T-cell (primary cell): ENCODE measurements at regions of chr6 and their contacts with region 1.

Region 1: DNA sequence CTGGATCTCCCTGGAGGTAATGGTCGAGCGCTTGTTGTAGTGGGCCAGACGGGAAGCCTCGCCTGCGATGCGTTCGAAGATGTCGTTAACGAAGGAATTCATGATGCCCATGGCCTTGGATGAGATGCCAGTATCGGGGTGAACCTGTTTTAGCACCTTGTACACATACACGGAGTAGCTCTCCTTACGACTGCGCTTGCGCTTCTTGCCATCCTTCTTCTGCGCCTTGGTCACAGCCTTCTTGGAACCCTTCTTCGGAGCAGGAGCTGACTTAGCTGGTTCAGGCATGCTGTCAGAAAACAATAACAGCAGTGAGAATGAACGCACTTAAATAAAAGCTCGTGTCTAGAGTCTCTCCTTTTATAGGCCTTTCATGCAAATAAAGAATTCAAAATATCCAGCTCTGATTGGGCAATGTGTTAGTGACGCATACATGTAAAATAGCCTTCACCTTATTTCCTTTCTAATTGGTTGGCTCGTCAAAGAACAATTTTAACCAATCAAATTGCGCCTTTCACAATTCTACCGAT is 129.2 kb downstream of the HFE start:
- DNase-seq: peak; percentile 56 to 93 (median 76)
- ATAC-seq: peak; percentile 77 to 87 (median 83)
- H3K4me3 ChIP-seq: peak overlapping the region; percentile 73 to 91
- H3K4me3 Mint-ChIP-seq: no peak overlapping the region
- H3K27ac ChIP-seq: peak overlapping the region; percentile 94
- H3K27ac Mint-ChIP-seq: no peak overlapping the region
- H3K4me1 ChIP-seq: peaks cover 13 to 32% of the 10 kb centered on the region in 2 experiments
- H3K4me1 Mint-ChIP-seq: peaks cover 0 to 8% (median 5%) of the 10 kb centered on the region in 3 donors
- H3K27me3 ChIP-seq: no peaks in the 10 kb centered on the region
- H3K27me3 Mint-ChIP-seq: no peaks in the 10 kb centered on the region

Region 2: DNA sequence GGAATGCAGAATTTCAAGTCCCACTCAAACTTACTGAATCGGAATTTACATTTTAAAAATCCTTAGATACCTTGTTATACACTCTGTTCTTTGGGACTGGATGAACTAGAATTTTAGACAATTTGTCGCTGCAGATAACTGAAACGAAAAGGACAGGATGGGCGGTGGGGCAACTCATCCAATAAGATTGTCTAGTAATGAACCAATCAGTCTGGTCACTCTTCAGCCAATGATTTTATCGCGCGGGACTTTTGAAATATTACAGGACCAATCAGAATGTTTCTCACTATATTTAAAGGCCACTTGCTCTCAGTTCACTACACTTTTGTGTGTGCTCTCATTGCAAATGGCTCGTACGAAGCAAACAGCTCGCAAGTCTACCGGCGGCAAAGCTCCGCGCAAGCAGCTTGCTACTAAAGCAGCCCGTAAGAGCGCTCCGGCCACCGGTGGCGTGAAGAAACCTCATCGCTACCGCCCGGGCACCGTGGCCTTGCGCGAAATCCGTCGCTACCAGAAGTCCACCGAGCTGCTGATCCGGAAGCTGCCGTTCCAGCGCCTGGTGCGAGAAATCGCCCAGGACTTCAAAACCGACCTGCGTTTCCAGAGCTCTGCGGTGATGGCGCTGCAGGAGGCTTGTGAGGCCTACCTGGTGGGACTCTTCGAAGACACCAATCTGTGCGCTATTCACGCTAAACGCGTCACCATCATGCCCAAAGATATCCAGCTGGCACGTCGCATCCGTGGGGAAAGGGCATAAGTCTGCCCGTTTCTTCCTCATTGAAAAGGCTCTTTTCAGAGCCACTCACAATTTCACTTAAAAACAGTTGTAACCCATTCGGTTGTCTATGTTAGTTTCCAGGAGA is 171.1 kb before region 1 on chr6:
- CTCF ChIA-PET with region 1: no interaction called
- POLR2A ChIA-PET with region 1: interaction called, 3 to 21 read pairs
- DNase-seq: peak; percentile 45 to 90 (median 78)
- ATAC-seq: peak; percentile 63 to 66 (median 64)
- H3K4me3 ChIP-seq: peak overlapping the region; percentile 77 to 83
- H3K4me3 Mint-ChIP-seq: peak overlapping the region; percentile 84 to 91 (median 90)
- H3K27ac ChIP-seq: peak overlapping the region; percentile 90
- H3K27ac Mint-ChIP-seq: peak overlapping the region; percentile 98
- H3K4me1 ChIP-seq: peaks cover 5 to 26% of the 10 kb centered on the region in 2 experiments
- H3K4me1 Mint-ChIP-seq: peaks cover 15 to 27% (median 26%) of the 10 kb centered on the region in 3 donors
- H3K27me3 ChIP-seq: no peaks in the 10 kb centered on the region
- H3K27me3 Mint-ChIP-seq: no peaks in the 10 kb centered on the region

Region 3: GRCh38 chr6:26183581-26184366 is 32.6 kb before region 1 on chr6:
- CTCF ChIA-PET with region 1: interaction called, 4 to 26 read pairs
- POLR2A ChIA-PET with region 1: interaction called, 13 to 85 read pairs
- DNase-seq: peak in 25 of 35 experiments; percentile 20 to 85 (median 42)
- ATAC-seq: peak; percentile 87 to 91 (median 89)
- H3K4me3 ChIP-seq: peak overlapping the region; percentile 57 to 83
- H3K4me3 Mint-ChIP-seq: peak overlapping the region; percentile 88 to 96 (median 93)
- H3K27ac ChIP-seq: peak overlapping the region; percentile 76
- H3K27ac Mint-ChIP-seq: peak overlapping the region; percentile 94 to 98
- H3K4me1 ChIP-seq: peaks cover 12 to 30% of the 10 kb centered on the region in 2 experiments
- H3K4me1 Mint-ChIP-seq: peaks cover 42 to 48% (median 46%) of the 10 kb centered on the region in 3 donors
- H3K27me3 ChIP-seq: no peaks in the 10 kb centered on the region
- H3K27me3 Mint-ChIP-seq: no peaks in the 10 kb centered on the region

Region 4: GRCh38 chr6:26234421-26235296 is 18.2 kb after region 1 on chr6:
- CTCF ChIA-PET with region 1: interaction called in 1 of 2 experiments, 32 read pairs
- POLR2A ChIA-PET with region 1: interaction called, 67 to 199 read pairs
- DNase-seq: peak; percentile 52 to 83 (median 66)
- ATAC-seq: peak; percentile 66 to 78 (median 76)
- H3K4me3 ChIP-seq: peak overlapping the region; percentile 88 to 98
- H3K4me3 Mint-ChIP-seq: peak overlapping the region; percentile 87 to 96 (median 88)
- H3K27ac ChIP-seq: peak overlapping the region; percentile 95
- H3K27ac Mint-ChIP-seq: peak overlapping the region; percentile 96 to 100
- H3K4me1 ChIP-seq: peaks cover 13 to 19% of the 10 kb centered on the region in 2 experiments
- H3K4me1 Mint-ChIP-seq: peaks cover 32 to 39% (median 36%) of the 10 kb centered on the region in 3 donors
- H3K27me3 ChIP-seq: no peaks in the 10 kb centered on the region
- H3K27me3 Mint-ChIP-seq: no peaks in the 10 kb centered on the region

Region 5: GRCh38 chr6:26270903-26271667 is 54.7 kb after region 1 on chr6:
- CTCF ChIA-PET with region 1: interaction called in 1 of 2 experiments, 11 read pairs
- POLR2A ChIA-PET with region 1: interaction called, 32 to 91 read pairs
- DNase-seq: peak; percentile 49 to 90 (median 74)
- ATAC-seq: peak; percentile 20 to 35 (median 32)
- H3K4me3 ChIP-seq: peak overlapping the region; percentile 71 to 83
- H3K4me3 Mint-ChIP-seq: no peak overlapping the region
- H3K27ac ChIP-seq: peak overlapping the region; percentile 89
- H3K27ac Mint-ChIP-seq: peak overlapping the region in 1 of 2 donors; percentile 58
- H3K4me1 ChIP-seq: peaks cover 18 to 31% of the 10 kb centered on the region in 2 experiments
- H3K4me1 Mint-ChIP-seq: peaks cover 20 to 29% (median 21%) of the 10 kb centered on the region in 3 donors
- H3K27me3 ChIP-seq: no peaks in the 10 kb centered on the region
- H3K27me3 Mint-ChIP-seq: no peaks in the 10 kb centered on the region

Region 6: DNA sequence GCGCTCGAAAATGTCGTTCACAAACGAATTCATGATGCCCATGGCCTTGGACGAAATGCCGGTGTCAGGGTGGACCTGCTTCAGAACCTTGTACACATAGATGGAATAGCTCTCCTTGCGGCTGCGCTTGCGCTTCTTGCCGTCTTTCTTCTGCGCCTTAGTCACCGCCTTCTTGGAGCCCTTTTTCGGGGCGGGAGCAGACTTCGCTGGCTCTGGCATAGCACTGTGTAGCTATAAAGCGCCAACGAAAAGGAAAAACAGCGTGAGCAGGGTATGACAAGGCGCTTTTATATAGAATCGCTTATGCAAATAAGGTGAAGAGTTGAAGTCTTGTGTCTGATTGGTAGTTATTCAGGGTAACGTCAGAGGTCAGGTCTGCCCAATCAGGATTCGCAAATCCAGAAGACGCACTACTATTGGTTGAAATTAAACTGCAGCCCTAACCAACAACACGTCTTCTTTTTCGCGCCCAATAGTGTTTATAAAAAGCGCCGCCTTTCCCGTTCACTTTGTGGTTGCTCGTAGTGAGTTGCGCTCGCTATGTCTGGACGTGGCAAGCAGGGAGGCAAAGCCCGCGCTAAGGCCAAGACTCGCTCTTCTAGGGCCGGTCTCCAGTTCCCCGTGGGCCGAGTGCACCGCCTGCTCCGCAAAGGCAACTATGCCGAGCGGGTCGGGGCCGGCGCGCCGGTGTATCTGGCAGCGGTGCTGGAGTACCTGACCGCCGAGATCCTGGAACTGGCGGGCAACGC is 916.3 kb after region 1 on chr6:
- CTCF ChIA-PET with region 1: no interaction called
- POLR2A ChIA-PET with region 1: interaction called in 1 of 2 experiments, 14 read pairs
- DNase-seq: peak; percentile 76 to 98 (median 87)
- ATAC-seq: peak; percentile 80 to 87 (median 86)
- H3K4me3 ChIP-seq: peak overlapping the region; percentile 49 to 77
- H3K4me3 Mint-ChIP-seq: no peak overlapping the region
- H3K27ac ChIP-seq: peak overlapping the region; percentile 85
- H3K27ac Mint-ChIP-seq: no peak overlapping the region
- H3K4me1 ChIP-seq: peaks cover 17 to 34% of the 10 kb centered on the region in 2 experiments
- H3K4me1 Mint-ChIP-seq: peaks cover 22 to 30% (median 22%) of the 10 kb centered on the region in 3 donors
- H3K27me3 ChIP-seq: no peaks in the 10 kb centered on the region
- H3K27me3 Mint-ChIP-seq: no peaks in the 10 kb centered on the region

Region 7: DNA sequence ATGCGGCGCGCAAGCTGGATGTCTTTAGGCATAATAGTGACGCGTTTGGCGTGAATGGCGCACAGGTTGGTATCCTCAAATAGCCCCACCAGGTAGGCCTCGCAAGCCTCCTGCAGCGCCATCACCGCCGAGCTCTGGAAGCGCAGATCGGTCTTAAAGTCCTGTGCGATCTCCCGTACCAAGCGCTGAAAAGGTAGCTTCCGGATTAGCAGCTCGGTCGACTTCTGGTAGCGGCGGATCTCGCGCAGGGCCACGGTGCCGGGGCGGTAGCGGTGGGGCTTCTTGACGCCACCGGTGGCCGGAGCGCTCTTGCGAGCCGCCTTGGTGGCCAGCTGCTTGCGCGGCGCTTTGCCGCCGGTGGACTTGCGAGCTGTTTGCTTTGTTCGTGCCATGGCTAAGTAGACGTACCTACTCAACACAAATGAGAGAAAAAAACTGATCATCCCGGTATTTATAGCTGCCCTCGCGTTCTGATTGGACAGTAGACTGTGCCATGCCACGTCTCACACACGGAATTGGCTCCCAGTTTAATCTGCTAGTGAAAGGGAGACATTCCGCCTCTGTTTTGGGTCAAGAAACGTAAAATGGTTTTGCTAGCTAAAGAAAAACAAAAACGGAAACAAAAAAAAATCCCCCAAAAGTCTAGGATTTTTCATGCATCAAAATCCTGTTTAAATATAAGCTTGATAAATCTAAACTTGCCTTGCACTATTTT is 1655.7 kb after region 1 on chr6:
- CTCF ChIA-PET with region 1: interaction called in 1 of 2 experiments, 4 read pairs
- POLR2A ChIA-PET with region 1: interaction called, 5 to 10 read pairs
- DNase-seq: peak; percentile 70 to 96 (median 84)
- ATAC-seq: peak; percentile 79 to 82 (median 80)
- H3K4me3 ChIP-seq: peak overlapping the region; percentile 65 to 80
- H3K4me3 Mint-ChIP-seq: peak overlapping the region; percentile 83 to 87 (median 84)
- H3K27ac ChIP-seq: peak overlapping the region; percentile 92
- H3K27ac Mint-ChIP-seq: peak overlapping the region; percentile 93 to 96
- H3K4me1 ChIP-seq: peaks cover 16 to 34% of the 10 kb centered on the region in 2 experiments
- H3K4me1 Mint-ChIP-seq: peaks cover 38 to 47% (median 42%) of the 10 kb centered on the region in 3 donors
- H3K27me3 ChIP-seq: no peaks in the 10 kb centered on the region
- H3K27me3 Mint-ChIP-seq: no peaks in the 10 kb centered on the region

Region 8: DNA sequence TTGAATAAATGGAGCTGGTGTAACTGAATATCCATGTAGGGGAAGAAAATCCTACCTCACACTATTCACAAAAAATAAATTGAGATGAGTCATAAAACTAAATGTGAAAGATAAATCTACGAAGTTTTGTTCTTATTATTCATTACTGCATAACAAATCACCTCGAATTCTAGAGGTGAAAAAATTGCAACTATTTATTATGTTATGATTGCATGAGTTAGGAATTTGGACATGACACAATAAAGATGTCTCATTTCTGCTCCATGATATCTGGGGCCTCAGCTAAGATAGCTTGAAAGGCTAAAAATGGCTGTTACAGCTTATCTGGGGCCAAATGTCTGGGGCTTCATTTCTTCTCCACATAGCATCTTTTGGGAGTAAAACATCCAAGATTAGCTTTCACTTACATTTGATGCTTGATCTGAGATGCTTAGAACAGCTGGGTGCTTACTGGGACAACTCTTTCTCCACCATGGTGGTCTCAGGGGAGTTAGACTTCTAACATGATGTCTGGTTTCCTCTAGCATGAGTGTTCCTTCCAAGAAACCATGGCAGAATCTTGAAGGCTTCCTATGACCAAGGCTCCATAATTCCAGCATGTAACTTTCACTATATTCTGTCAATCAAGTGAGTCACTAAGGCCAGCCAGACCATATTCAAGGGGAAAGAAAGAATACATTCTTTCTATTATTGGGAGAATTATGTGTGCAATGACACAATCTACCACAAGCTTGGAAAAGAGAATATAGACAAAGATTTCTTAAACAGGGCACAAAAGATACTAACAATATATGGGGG is 1770.7 kb after region 1 on chr6:
- CTCF ChIA-PET with region 1: no interaction called
- POLR2A ChIA-PET with region 1: no interaction called
- DNase-seq: no peak
- ATAC-seq: no peak
- H3K4me3 ChIP-seq: no peak overlapping the region
- H3K4me3 Mint-ChIP-seq: no peak overlapping the region
- H3K27ac ChIP-seq: no peak overlapping the region
- H3K27ac Mint-ChIP-seq: no peak overlapping the region
- H3K4me1 ChIP-seq: no peaks in the 10 kb centered on the region
- H3K4me1 Mint-ChIP-seq: no peaks in the 10 kb centered on the region
- H3K27me3 ChIP-seq: peaks cover 0 to 2% of the 10 kb centered on the region in 2 experiments
- H3K27me3 Mint-ChIP-seq: peaks cover 27 to 50% of the 10 kb centered on the region in 2 donors